ENCODE measurements at regions of chr12 and their contacts with region 1.

Region 1: DNA sequence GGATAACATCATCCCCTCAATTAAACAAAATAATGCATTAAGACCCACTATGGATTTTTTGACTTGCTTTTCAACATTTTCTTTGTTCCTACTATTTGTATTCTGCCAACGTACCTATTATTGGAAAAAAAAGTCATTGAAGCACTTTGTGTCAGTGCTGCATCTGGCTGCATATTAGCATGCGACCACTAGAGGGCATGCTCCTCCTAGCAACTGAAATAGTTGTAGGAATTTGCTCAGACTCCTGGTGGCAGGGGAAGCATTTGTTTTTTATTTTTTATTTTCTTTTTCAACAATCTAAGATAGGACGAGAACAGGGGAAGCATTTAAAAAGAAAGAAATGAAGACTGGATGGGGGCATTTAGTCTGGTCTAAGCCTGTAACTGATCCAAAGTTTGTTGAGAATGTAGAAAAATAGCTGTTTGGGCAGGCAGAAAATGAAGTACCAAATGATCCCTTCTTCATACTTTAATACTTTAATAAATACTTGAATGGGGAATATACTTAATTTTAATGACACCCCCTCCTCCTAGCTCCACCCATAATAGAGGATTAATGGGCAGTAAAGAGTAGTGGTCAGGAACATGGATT is 14.5 kb upstream of the CLEC4A start:
- DNase-seq: peak; percentile 66 to 91 (median 77)
- H3K4me3 ChIP-seq: no peak overlapping the region
- H3K27ac ChIP-seq: no peak overlapping the region
- H3K4me1 ChIP-seq: no peaks in the 10 kb centered on the region
- H3K27me3 ChIP-seq: no peaks in the 10 kb centered on the region
- CTCF ChIP-seq: peak; percentile 88 to 99 (median 96)
- POLR2A ChIP-seq: no peak

Region 2: GRCh38 chr12:7970475-7971252 is 138.2 kb before region 1 on chr12:
- intact Hi-C with region 1: no loop called
- DNase-seq: peak; percentile 80 to 90 (median 85)
- H3K4me3 ChIP-seq: peak overlapping the region in 1 of 4 donors; percentile 39
- H3K27ac ChIP-seq: peak overlapping the region in 4 of 5 donors; percentile 21 to 83 (median 66)
- H3K4me1 ChIP-seq: peaks cover 7 to 9% of the 10 kb centered on the region in 2 donors
- H3K27me3 ChIP-seq: no peaks in the 10 kb centered on the region
- CTCF ChIP-seq: peak in 5 of 6 experiments; percentile 12 to 48 (median 19)
- POLR2A ChIP-seq: peak in 1 of 2 donors; percentile 8

Region 3: DNA sequence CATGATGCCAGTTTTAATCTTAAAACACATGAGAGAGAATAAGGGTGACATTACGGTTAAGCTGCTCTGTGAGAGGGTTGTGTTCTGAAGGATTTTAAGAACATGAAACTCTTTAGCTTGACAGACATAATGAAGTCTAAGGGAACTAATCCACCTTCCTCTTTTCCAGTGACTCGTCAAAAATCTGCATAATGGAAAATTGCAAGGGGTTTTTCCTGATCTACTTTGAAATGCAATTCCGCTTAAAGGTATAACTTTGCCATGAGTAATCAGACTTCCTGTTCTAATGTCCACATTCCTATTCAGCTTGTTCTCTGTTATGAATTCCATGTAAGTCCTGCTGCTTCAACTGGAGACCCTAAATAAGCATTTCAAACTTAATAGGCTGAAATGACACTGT is 47.9 kb after region 1 on chr12 and contains the start of gene ZNF705A:
- intact Hi-C with region 1: no loop called
- DNase-seq: no peak
- H3K4me3 ChIP-seq: no peak within 1 kb of the TSS
- H3K27ac ChIP-seq: peak within 1 kb of the TSS in 2 of 5 donors; percentile 10 to 13
- H3K4me1 ChIP-seq: no peaks in the 10 kb centered on the region
- H3K27me3 ChIP-seq: no peaks in the 10 kb centered on the region
- CTCF ChIP-seq: no peak
- POLR2A ChIP-seq: no peak
- total RNA-seq, gene ZNF705A: not detected

Region 4: GRCh38 chr12:8226355-8226754 is 117.5 kb after region 1 on chr12:
- intact Hi-C with region 1: loop called in 1 of 2 experiments (anchors 10 kb)
- DNase-seq: peak in 1 of 7 donors; percentile 42
- H3K4me3 ChIP-seq: no peak overlapping the region
- H3K27ac ChIP-seq: no peak overlapping the region
- H3K4me1 ChIP-seq: no peaks in the 10 kb centered on the region
- H3K27me3 ChIP-seq: no peaks in the 10 kb centered on the region
- CTCF ChIP-seq: no peak
- POLR2A ChIP-seq: no peak

Measured in adrenal gland (tissue), 19 donors.